ENCODE measurements at regions of chr12 and their contacts with region 1.

Region 1: GRCh38 chr12:120783197-120783596 is 57.6 kb downstream of the ACADS start:
- DNase-seq: peak; percentile 97
- ATAC-seq: peak; percentile 95
- H3K4me3 ChIP-seq: peak overlapping the region; percentile 16; the same call in 1 of the 2 replicates
- H3K27ac ChIP-seq: peak overlapping the region; percentile 58
- H3K4me1 ChIP-seq: peaks cover 22% of the 10 kb centered on the region
- H3K27me3 ChIP-seq: no peaks in the 10 kb centered on the region
- CTCF ChIP-seq: no peak

Region 2: DNA sequence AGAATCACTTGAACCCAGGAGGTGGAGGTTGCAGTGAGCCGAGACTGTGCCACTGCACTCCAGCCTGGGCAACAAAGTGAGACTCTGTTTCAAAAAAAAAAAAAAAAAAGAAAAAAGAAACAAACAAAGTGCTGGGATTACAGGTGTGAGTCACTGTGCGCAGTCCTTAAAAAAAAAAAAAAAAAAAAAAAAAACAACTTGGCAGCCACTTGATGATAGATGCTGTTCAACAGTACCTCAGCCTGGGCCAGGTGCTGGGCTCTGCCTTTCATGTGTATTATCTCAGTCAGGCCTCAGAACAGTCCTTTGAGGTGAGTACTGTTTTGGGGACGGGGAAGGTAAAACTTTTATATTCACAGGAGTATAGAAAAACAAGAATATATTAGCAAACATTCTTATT is 48.0 kb before region 1 on chr12:
- CTCF ChIA-PET with region 1: no interaction called
- POLR2A ChIA-PET with region 1: no interaction called
- intact Hi-C with region 1: no loop called
- DNase-seq: no peak
- ATAC-seq: no peak
- H3K4me3 ChIP-seq: no peak overlapping the region
- H3K27ac ChIP-seq: no peak overlapping the region
- H3K4me1 ChIP-seq: no peaks in the 10 kb centered on the region
- H3K27me3 ChIP-seq: no peaks in the 10 kb centered on the region
- CTCF ChIP-seq: no peak

Region 3: GRCh38 chr12:120849765-120850164 is 66.6 kb after region 1 on chr12:
- CTCF ChIA-PET with region 1: no interaction called
- POLR2A ChIA-PET with region 1: no interaction called
- intact Hi-C with region 1: loop called (anchors 5 kb)
- DNase-seq: peak; percentile 86
- ATAC-seq: peak; percentile 91
- H3K4me3 ChIP-seq: peak overlapping the region; percentile 6; the same call in 1 of the 2 replicates
- H3K27ac ChIP-seq: peak overlapping the region; percentile 66
- H3K4me1 ChIP-seq: peaks cover 51% of the 10 kb centered on the region
- H3K27me3 ChIP-seq: no peaks in the 10 kb centered on the region
- CTCF ChIP-seq: no peak; the same call in 1 of the 2 replicates